Activated B cell treated with CpG ODN at 0.5 μM for 24 hours (primary cell): ENCODE measurements at regions of chr20 and their contacts with region 1.

Region 1: DNA sequence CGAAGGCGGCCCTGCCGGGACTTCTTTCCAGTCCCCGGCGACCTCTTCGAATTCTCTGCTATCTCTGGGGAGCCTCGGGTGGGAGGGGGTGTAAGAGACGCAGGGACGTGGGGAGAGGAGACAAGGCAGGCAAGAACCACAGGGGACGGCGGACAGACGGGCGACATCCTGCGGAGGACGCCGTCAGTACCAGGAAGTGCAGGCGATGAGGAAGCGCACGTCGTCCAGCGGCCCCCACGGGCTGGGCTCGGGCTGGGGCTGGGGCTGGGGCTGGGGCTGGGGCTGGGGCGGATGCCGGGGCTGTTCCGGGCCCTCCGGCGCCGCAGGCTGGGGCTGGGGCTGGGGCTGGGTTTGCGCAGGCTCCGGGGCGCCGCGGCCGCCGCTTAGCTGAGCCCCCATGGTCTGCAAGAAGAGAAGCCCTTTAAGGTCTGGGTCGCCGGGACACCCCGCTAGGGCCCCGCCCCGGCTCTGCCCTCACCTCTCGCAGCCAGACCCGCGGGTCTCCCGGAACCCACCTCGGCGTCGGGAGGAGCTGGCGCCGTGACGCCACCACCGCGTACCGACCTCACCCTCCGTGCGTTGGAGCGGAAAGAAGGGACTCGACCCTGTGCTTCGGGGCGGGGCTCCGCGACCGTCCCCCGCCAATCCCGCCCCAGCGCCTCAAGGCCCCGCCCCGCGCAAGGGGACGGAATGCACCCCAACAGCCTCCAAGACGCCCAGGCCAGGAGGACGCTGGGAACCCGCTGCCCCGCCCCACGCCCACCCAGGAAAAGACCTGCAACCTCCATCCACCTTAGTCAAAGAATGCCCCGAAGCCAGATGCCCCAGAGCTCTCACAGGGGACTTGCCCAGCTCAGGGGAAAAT is at the start of gene MMP24OS:
- DNase-seq: peak; percentile 85
- ATAC-seq: peak; percentile 90
- H3K4me3 Mint-ChIP-seq: peak within 1 kb of the TSS; percentile 97
- H3K27ac Mint-ChIP-seq: peak within 1 kb of the TSS; percentile 99
- H3K4me1 Mint-ChIP-seq: peaks cover 31% of the 10 kb centered on the region
- H3K27me3 Mint-ChIP-seq: no peaks in the 10 kb centered on the region
- CTCF ChIP-seq: no peak
- total RNA-seq, gene MMP24OS: 39.2 and 47.9 TPM in 2 replicates

Region 2: GRCh38 chr20:33753763-33754162 is 1524.0 kb before region 1 on chr20:
- CTCF ChIA-PET with region 1: no interaction called
- POLR2A ChIA-PET with region 1: interaction called, 11 read pairs
- intact Hi-C with region 1: no loop called
- DNase-seq: no peak
- ATAC-seq: no peak
- H3K4me3 Mint-ChIP-seq: no peak overlapping the region
- H3K27ac Mint-ChIP-seq: no peak overlapping the region
- H3K4me1 Mint-ChIP-seq: peaks cover 13% of the 10 kb centered on the region
- H3K27me3 Mint-ChIP-seq: no peaks in the 10 kb centered on the region
- CTCF ChIP-seq: no peak

Region 3: DNA sequence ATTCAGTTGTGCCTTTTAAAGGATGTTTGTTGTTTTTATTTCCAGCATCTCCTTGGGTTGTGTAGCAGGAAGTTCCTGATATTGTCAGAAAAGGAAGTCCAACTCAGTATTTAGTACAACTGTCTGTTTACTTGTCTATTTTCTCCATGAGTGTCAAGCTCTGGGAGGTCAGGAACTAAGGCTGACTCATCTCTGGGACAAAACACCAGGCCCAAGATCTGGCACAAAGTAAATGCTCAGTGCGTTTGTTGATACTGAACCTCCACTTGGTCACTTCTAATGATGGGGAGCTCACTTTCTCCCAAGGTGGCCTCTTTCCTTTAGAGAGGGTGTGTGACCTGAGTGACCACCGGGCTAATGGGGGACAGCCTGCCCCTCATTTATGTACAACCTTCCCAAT is 588.3 kb before region 1 on chr20:
- CTCF ChIA-PET with region 1: no interaction called
- POLR2A ChIA-PET with region 1: no interaction called
- intact Hi-C with region 1: no loop called
- DNase-seq: no peak
- ATAC-seq: no peak
- H3K4me3 Mint-ChIP-seq: no peak overlapping the region
- H3K27ac Mint-ChIP-seq: no peak overlapping the region
- H3K4me1 Mint-ChIP-seq: no peaks in the 10 kb centered on the region
- H3K27me3 Mint-ChIP-seq: no peaks in the 10 kb centered on the region
- CTCF ChIP-seq: no peak

Region 4: GRCh38 chr20:34955232-34956040 is 322.3 kb before region 1 on chr20 and contains the starts of genes GSS and MYH7B:
- CTCF ChIA-PET with region 1: no interaction called
- POLR2A ChIA-PET with region 1: interaction called, 4 read pairs
- intact Hi-C with region 1: loop called (anchors 5 kb)
- DNase-seq: peak; percentile 98
- ATAC-seq: peak; percentile 95
- H3K4me3 Mint-ChIP-seq: peak within 1 kb of the TSS; percentile 97
- H3K27ac Mint-ChIP-seq: peak within 1 kb of the TSS; percentile 83
- H3K4me1 Mint-ChIP-seq: peaks cover 26% of the 10 kb centered on the region
- H3K27me3 Mint-ChIP-seq: no peaks in the 10 kb centered on the region
- CTCF ChIP-seq: no peak
- total RNA-seq, gene GSS: 26.1 and 27.5 TPM in 2 replicates
- total RNA-seq, gene MYH7B: 0.20 and 0.35 TPM in 2 replicates

Region 5: GRCh38 chr20:35039146-35039545 is 238.6 kb before region 1 on chr20:
- CTCF ChIA-PET with region 1: no interaction called
- POLR2A ChIA-PET with region 1: no interaction called
- intact Hi-C with region 1: no loop called
- DNase-seq: no peak
- ATAC-seq: no peak
- H3K4me3 Mint-ChIP-seq: no peak overlapping the region
- H3K27ac Mint-ChIP-seq: no peak overlapping the region
- H3K4me1 Mint-ChIP-seq: no peaks in the 10 kb centered on the region
- H3K27me3 Mint-ChIP-seq: no peaks in the 10 kb centered on the region
- CTCF ChIP-seq: no peak

Region 6: GRCh38 chr20:35200255-35200654 is 77.5 kb before region 1 on chr20:
- CTCF ChIA-PET with region 1: no interaction called
- POLR2A ChIA-PET with region 1: no interaction called
- intact Hi-C with region 1: no loop called
- DNase-seq: no peak
- ATAC-seq: no peak
- H3K4me3 Mint-ChIP-seq: no peak overlapping the region
- H3K27ac Mint-ChIP-seq: no peak overlapping the region
- H3K4me1 Mint-ChIP-seq: no peaks in the 10 kb centered on the region
- H3K27me3 Mint-ChIP-seq: no peaks in the 10 kb centered on the region
- CTCF ChIP-seq: no peak

Region 7: GRCh38 chr20:35823147-35823546 is 545.4 kb after region 1 on chr20:
- CTCF ChIA-PET with region 1: no interaction called
- POLR2A ChIA-PET with region 1: interaction called, 10 read pairs
- intact Hi-C with region 1: no loop called
- DNase-seq: no peak
- ATAC-seq: no peak
- H3K4me3 Mint-ChIP-seq: no peak overlapping the region
- H3K27ac Mint-ChIP-seq: no peak overlapping the region
- H3K4me1 Mint-ChIP-seq: peaks cover 11% of the 10 kb centered on the region
- H3K27me3 Mint-ChIP-seq: no peaks in the 10 kb centered on the region
- CTCF ChIP-seq: no peak